Naive thymus-derived CD8-positive, alpha-beta T cell (primary cell): ENCODE measurements at regions of chr7 and their contacts with region 1.

Region 1: DNA sequence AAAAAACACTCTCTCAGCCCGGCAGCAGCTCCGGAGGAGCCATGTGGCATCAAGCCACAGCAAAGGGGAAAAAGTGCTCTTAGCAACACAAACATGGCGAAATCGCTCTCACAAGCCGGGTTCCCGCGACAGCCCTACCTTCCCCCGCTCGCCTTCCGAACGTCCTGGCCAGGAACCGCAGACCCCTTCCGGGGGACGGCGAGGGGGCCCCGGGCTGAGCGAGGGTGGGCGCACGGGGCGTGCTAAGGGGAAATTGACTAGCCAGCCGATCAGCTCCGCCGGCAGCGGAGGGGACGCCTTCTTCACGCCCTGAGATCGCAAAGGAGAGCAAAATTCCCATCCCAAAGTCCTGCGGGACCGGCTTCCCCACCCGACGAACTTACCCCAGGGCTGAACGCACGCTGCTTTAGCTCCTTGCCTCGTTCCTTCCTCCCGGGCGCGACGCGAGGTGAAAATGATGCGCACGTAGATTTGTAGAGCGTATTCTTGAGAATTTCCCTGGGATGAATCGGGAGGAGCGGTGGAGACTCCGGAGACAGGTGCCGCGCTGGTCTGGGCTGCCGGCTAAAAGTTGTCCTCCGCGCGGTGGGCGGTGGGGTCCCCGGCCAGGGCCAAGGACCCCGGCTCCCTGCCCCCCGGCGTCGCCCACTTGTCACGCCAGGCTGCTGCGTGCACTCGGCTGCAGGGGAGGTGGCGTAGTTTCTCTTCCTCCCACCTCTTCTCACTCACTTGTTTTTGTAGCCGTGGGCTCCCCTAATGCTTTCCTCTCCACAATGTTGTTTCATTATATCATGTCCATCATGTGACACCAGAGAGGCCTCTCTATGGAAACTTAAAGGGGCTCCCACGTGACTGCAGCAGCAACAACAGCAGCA is 220.1 kb upstream of the MKLN1 start:
- DNase-seq: peak; percentile 31 to 92 (median 82)
- ATAC-seq: peak; percentile 32 to 51
- H3K4me3 Mint-ChIP-seq: peak overlapping the region; percentile 92 to 100 (median 99)
- H3K27ac Mint-ChIP-seq: peak overlapping the region; percentile 96 to 100 (median 100)
- H3K4me1 Mint-ChIP-seq: peaks cover 46 to 79% (median 72%) of the 10 kb centered on the region in 4 donors
- H3K27me3 Mint-ChIP-seq: peaks cover 0 to 7% (median 0%) of the 10 kb centered on the region in 5 donors

Region 2: GRCh38 chr7:130996841-130997231 is 110.7 kb before region 1 on chr7:
- POLR2A ChIA-PET with region 1: no interaction called
- DNase-seq: no peak
- ATAC-seq: peak in 1 of 2 donors; percentile 32
- H3K4me3 Mint-ChIP-seq: peak overlapping the region in 9 of 10 donors; percentile 18 to 73 (median 54)
- H3K27ac Mint-ChIP-seq: peak overlapping the region; percentile 61 to 92 (median 86)
- H3K4me1 Mint-ChIP-seq: peaks cover 36 to 86% (median 74%) of the 10 kb centered on the region in 4 donors
- H3K27me3 Mint-ChIP-seq: no peaks in the 10 kb centered on the region

Region 3: DNA sequence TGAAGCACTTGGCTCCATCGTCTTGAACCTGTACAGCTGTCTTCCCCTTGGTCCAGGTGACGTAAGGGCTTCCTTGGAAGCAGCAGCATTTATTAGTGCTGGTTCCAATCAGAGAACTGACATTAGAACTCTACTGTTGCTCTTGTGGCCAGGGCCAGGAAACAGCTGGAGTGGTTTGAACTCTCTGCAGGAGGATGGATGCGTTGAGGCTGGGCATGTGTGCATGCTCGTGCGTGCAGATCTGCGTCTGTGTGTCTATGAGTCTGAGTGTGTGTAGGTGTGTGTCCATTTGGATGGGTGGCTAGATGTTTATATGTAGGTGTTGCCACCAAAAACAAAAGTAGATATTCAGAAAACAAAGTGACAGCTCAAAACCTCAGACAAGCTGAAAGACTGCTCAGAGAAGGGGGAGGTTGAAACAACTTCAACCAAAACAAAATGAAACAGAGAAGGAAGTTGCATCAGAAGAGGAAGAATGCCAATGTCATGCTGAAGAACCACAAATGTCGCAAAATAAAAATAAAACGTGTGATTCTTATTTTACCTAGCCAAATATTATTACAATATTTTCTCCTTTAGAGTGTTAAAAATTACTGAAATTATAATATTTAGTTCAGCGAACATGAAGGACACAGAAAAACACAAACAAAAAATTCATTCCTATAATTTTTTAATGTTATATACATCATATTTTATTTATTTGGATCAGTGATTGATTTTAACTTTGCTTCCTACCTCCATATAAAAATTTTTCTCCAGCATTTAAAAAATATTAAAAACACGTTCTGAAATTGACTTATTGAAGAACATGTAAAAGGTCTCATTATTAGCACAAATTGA is 124.0 kb after region 1 on chr7:
- POLR2A ChIA-PET with region 1: interaction called, 42 read pairs
- DNase-seq: peak; percentile 12 to 83 (median 69)
- ATAC-seq: peak; percentile 77 to 80
- H3K4me3 Mint-ChIP-seq: peak overlapping the region; percentile 69 to 86 (median 78)
- H3K27ac Mint-ChIP-seq: peak overlapping the region; percentile 67 to 95 (median 90)
- H3K4me1 Mint-ChIP-seq: peaks cover 21 to 50% (median 31%) of the 10 kb centered on the region in 4 donors
- H3K27me3 Mint-ChIP-seq: no peaks in the 10 kb centered on the region

Region 4: DNA sequence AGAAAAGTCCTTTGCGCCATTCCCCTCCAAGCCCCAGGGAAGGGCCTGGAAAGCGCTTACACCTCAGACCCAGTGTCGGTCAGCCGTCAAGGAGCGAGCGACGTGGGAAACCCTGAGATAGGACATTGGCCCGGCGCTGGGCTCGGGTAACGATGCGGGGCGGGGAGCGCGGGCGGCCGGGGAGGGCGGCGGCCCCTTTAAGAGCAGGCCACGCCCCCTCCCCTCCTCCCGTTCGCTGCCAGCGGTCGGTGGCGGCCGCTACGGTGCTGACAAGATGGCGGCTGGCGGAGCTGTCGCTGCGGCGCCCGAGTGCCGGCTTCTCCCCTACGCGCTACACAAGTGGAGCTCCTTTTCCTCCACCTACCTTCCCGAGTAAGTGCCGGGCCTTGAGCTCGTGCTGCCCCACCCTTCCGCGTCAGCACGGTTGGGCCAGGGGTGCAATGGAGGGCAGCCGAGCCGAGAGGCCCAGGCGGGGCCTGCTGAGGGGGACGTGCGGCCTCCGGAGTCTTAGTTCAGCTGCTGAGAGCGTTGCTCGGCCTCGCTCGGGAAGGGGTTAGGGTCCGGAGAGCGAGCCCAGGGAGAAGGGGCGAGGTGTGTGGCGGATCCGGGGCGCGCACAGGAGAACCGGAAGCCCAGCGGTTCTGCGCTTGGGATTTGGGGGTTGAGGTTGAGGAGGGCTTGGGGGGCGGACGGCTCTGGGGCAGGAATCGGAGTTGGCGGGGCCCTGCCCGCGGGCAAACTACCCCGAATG is 220.2 kb after region 1 on chr7 and contains the start of gene MKLN1:
- POLR2A ChIA-PET with region 1: interaction called, 45 read pairs
- DNase-seq: peak; percentile 79 to 92 (median 86)
- ATAC-seq: peak; percentile 90 to 92
- H3K4me3 Mint-ChIP-seq: peak within 1 kb of the TSS; percentile 84 to 100 (median 98)
- H3K27ac Mint-ChIP-seq: peak within 1 kb of the TSS; percentile 96 to 99 (median 98)
- H3K4me1 Mint-ChIP-seq: peaks cover 24 to 74% (median 61%) of the 10 kb centered on the region in 4 donors
- H3K27me3 Mint-ChIP-seq: no peaks in the 10 kb centered on the region
- polyA plus RNA-seq, gene MKLN1: 17.0 to 20.2 (median 20.0) TPM